AG04449 (cell line): ENCODE measurements at regions of chr11 and their contacts with region 1.

Region 1: GRCh38 chr11:36492724-36493304 is 17.3 kb downstream of the TRAF6 start:
- DNase-seq: no peak
- H3K4me3 ChIP-seq: no peak overlapping the region
- CTCF ChIP-seq: peak; percentile 51

Region 2: GRCh38 chr11:36278531-36279282 is 214.1 kb before region 1 on chr11:
- CTCF ChIA-PET with region 1: interaction called, 11 read pairs
- POLR2A ChIA-PET with region 1: no interaction called
- DNase-seq: no peak
- H3K4me3 ChIP-seq: no peak overlapping the region
- CTCF ChIP-seq: no peak

Region 3: GRCh38 chr11:36289226-36289852 is 203.5 kb before region 1 on chr11 and contains the start of gene COMMD9:
- CTCF ChIA-PET with region 1: interaction called, 243 read pairs
- POLR2A ChIA-PET with region 1: no interaction called
- DNase-seq: peak; percentile 37
- H3K4me3 ChIP-seq: peak within 1 kb of the TSS; percentile 90
- CTCF ChIP-seq: no peak

Region 4: GRCh38 chr11:36306888-36307287 is 185.9 kb before region 1 on chr11:
- CTCF ChIA-PET with region 1: interaction called, 243 read pairs
- POLR2A ChIA-PET with region 1: no interaction called
- DNase-seq: no peak
- H3K4me3 ChIP-seq: no peak overlapping the region
- CTCF ChIP-seq: peak; percentile 47

Region 5: DNA sequence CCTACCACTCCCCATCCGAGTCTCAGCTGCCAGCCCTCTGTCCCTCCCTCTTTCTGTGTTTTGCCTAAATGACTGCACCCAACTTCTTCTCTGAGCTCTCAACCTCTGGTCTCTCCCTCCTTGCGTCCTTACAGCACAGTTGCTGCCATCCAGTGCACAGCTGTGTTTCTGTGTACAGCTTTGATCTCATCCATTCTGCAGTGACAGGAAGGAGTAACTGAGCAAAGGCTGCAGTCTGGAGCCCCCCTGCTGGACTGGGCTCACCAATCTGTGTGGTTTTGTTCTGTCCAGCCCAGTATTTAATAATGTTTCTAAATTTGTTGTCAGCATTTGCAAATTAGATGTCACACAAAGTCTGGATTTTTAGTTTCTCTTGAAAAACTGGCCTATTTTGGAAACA is 152.9 kb before region 1 on chr11:
- CTCF ChIA-PET with region 1: interaction called, 12 read pairs
- POLR2A ChIA-PET with region 1: no interaction called
- DNase-seq: no peak
- H3K4me3 ChIP-seq: no peak overlapping the region
- CTCF ChIP-seq: no peak

Region 6: GRCh38 chr11:36363361-36364268 is 129.2 kb before region 1 on chr11:
- CTCF ChIA-PET with region 1: interaction called, 10 read pairs
- POLR2A ChIA-PET with region 1: no interaction called
- DNase-seq: no peak
- H3K4me3 ChIP-seq: no peak overlapping the region
- CTCF ChIP-seq: no peak

Region 7: DNA sequence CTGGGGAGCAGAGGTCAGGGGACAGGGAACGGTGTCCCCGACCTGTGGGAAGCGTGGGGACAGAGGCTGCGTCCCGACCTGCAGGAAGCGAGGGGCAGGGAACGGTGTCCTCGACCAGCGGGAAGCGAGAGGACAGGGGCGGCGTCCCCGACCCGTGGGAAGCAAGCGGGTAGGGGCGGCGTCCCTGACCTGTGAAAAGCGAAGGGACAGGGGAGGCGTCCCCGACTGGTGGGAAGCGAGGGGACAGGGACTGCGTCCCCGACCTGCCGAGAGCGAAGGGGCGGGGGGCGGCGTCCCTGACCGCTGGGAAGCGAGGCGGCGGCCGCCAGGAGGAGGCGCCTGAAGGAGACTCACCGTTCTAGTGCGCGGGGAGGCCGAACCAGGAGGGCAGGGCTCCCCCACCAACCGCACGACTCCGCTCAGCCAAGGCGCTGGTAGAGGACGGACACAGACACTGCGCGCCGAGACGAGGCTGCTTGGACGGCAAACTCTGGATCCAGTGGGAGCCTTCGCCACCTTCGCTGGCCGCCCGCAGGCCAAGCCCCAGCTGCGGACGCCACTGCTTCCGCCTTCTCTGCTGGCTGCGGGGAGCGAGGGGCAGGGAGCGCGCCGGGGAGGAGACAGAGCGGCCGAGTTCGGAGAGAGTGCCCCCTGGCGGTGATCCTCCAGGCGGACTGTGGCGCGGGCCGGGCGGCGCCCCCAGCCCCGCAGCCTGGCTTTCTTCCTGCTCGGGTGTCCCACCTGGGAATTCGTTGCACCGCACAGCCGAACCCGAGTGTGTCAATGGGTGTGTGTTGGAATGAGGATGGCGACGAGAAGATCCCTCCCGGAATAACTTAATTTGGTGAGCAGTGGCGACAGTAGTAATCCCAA is 17.1 kb after region 1 on chr11 and contains the start of gene TRAF6:
- CTCF ChIA-PET with region 1: interaction called, 26 read pairs
- POLR2A ChIA-PET with region 1: interaction called, 3 read pairs
- DNase-seq: no peak
- H3K4me3 ChIP-seq: peak within 1 kb of the TSS; percentile 99
- CTCF ChIP-seq: peak; percentile 98